GM18951 (cell line): ENCODE measurements at regions of chr14 and their contacts with region 1.

Region 1: GRCh38 chr14:77862154-77862786 is 62.4 kb downstream of the ADCK1 start:
- POLR2A ChIP-seq: no peak

Region 2: GRCh38 chr14:78164238-78164853 is 302.1 kb after region 1 on chr14:
- in situ Hi-C with region 1: no loop called
- POLR2A ChIP-seq: no peak

Region 3: GRCh38 chr14:78598041-78598920 is 736.0 kb after region 1 on chr14:
- in situ Hi-C with region 1: loop called (anchors 25 kb)
- POLR2A ChIP-seq: no peak